ENCODE measurements at regions of chr19 and their contacts with region 1.

Region 1: DNA sequence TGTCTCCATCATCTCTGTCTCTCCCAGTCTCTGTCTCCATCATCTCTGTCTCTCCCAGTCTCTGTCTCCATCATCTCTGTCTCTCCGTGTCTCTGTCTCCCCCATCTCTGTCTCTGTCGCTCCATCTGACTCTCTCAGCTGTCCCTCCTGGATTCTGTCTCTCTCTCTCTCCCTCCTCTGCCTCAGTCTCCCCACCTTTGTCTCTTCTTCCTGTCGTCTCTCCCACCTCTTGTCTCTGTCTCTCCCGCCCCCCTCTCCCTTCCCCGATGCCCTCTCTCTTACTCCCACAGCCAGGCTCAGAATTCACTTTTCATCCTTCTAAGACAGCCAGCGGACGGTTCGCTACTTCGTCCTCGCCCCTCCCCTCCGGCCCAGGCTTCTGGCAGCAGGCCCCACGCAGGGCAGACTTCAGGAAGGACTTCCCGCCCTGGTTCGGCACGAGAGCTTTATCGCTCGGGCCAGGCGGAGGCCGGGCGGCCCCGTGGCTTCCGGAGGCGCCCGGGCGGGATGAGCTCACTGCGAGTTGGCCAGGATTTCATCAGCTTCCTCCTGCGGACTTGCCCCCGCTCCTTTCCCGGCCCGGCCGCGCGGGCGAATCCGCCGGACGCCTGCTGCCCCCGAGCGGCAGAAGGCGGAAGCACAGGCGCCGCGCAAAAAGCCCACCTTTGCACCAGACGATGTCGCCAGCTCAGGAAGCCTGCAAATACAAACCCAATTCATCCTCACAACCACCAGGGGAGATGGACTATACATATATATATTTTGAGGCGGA is 12.4 kb upstream of the CCDC9 start:
- DNase-seq: peak; percentile 98

Region 2: GRCh38 chr19:47152224-47153017 is 91.5 kb before region 1 on chr19:
- intact Hi-C with region 1: loop called (anchors 2 kb)
- DNase-seq: no peak

Region 3: DNA sequence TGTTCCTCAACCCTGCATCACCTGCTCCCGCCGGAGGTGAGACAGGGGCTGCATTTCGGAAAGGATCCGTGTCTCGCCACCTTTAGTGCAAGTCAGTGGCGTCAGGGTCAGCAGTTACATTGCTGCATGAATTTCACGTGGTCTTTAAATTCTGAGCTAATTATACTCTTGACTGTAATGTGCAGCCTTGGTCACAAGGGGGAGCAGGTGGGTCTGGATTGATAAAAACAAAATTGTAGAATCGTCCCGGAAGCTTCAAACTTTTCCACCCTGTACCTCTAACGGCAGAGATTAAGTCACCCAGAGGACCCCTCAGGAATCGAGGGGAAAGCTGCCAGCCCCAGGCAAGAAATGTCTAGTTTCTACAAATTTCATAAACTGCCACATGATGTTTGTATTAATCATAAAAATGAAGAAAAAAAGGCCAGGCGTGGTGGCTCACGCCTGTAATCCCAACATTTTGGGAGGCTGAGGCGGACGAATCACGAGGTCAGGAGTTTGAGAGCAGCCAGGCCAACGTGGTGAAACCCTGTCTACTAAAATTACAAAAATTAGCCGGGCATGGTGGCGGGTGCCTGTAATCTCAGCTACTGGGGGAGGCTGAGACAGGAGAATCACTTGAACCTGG is 33.2 kb before region 1 on chr19:
- intact Hi-C with region 1: loop called (anchors 1 kb)
- DNase-seq: no peak

Region 4: DNA sequence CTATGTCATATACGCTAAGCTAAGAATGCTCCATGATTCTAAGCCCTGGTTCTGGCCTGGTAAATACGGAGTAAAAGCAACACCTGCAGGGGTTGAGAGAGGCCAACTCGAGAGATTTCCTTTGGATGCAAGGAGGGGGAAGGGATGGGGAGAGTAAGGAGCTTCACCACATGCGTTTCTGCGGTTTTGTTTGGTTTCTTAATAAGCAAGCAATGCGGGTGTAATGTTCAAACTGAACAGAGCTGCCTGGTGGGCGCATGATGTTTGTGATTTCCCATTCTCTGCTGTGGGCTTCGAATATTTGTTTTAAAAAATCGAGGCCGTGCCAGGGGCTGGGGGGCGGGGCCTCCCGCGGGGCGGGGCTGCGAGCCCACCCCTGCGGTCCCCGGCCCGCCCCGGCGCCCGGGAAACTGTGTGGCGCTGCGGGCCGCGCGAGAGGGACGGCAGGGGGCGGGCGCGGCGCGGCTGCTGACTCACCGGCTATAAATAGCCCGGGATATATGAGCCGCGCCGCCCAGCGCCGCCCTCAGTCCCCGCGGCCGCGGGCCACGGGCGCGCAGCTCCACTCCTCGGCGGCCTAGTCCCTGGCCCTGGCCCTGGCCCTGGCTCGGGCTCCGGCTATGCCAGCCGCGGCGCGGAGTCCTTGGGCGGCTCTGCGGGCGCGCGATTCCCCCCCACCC is 18.1 kb before region 1 on chr19:
- intact Hi-C with region 1: loop called (anchors 1 kb)
- DNase-seq: peak; percentile 93

Measured in cardiac septum (tissue), 1 donor.